CD4-positive, alpha-beta memory T cell (primary cell): ENCODE measurements at regions of chr1 and their contacts with region 1.

Region 1: DNA sequence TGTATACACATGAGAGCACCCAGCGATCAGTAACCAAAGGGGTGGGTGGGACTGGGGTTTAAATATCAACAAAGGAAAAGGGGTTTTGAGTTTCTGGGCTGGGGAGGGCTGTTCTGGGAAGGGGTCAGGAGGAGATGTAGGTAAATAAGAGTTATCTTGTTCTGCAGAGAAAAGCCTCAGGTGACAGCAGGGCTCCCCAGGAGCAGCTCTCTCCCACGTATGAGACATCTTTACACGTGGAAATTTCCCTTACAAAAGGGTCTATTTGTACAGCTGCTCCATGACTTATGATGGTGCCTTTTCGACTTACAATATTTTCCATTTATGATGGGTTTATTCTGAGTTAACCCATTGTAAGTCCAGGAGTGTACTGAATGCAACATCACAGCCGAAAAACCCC is 16.3 kb upstream of the PADI2 start:
- DNase-seq: no peak
- H3K4me3 ChIP-seq: no peak overlapping the region
- H3K4me3 Mint-ChIP-seq: no peak overlapping the region
- H3K27ac ChIP-seq: no peak overlapping the region
- H3K27ac Mint-ChIP-seq: no peak overlapping the region
- H3K4me1 ChIP-seq: no peaks in the 10 kb centered on the region
- H3K4me1 Mint-ChIP-seq: no peaks in the 10 kb centered on the region
- H3K27me3 ChIP-seq: no peaks in the 10 kb centered on the region
- H3K27me3 Mint-ChIP-seq: peaks cover 17 to 20% of the 10 kb centered on the region in 2 donors

Region 2: DNA sequence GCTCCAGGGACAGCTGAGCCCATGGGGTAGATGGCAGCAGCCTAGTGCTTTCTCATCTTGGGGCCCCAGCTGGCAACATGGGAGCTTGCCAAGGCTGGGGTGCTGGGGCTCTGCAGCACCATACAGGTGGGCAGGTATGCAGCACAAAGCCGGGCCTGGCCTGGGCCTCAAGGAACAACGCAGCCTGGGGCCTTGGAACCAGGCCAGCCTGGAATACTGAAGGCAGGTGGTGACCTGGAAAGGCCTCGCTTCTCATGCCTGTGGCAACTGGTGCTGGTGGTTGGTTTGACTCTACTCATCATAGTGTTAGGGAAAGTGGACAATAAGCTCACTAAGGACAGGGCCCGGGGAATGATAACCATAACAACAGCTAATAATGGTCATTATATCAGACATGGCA is 54.6 kb before region 1 on chr1:
- CTCF ChIA-PET with region 1: no interaction called
- POLR2A ChIA-PET with region 1: no interaction called
- intact Hi-C with region 1: no loop called
- DNase-seq: no peak
- H3K4me3 ChIP-seq: no peak overlapping the region
- H3K4me3 Mint-ChIP-seq: no peak overlapping the region
- H3K27ac ChIP-seq: no peak overlapping the region
- H3K27ac Mint-ChIP-seq: no peak overlapping the region
- H3K4me1 ChIP-seq: no peaks in the 10 kb centered on the region
- H3K4me1 Mint-ChIP-seq: no peaks in the 10 kb centered on the region
- H3K27me3 ChIP-seq: no peaks in the 10 kb centered on the region
- H3K27me3 Mint-ChIP-seq: peaks cover 5 to 7% of the 10 kb centered on the region in 2 donors

Region 3: GRCh38 chr1:17236779-17237560 is 101.4 kb after region 1 on chr1:
- CTCF ChIA-PET with region 1: interaction called, 16 read pairs
- POLR2A ChIA-PET with region 1: no interaction called
- intact Hi-C with region 1: no loop called
- DNase-seq: peak; percentile 69 to 79 (median 74)
- H3K4me3 ChIP-seq: no peak overlapping the region
- H3K4me3 Mint-ChIP-seq: no peak overlapping the region
- H3K27ac ChIP-seq: no peak overlapping the region
- H3K27ac Mint-ChIP-seq: peak overlapping the region in 1 of 7 donors; percentile 73
- H3K4me1 ChIP-seq: no peaks in the 10 kb centered on the region
- H3K4me1 Mint-ChIP-seq: peaks cover 0 to 9% (median 0%) of the 10 kb centered on the region in 4 donors
- H3K27me3 ChIP-seq: no peaks in the 10 kb centered on the region
- H3K27me3 Mint-ChIP-seq: peaks cover 2 to 3% of the 10 kb centered on the region in 2 donors

Region 4: GRCh38 chr1:17250601-17251000 is 115.1 kb after region 1 on chr1:
- CTCF ChIA-PET with region 1: no interaction called
- POLR2A ChIA-PET with region 1: no interaction called
- intact Hi-C with region 1: no loop called
- DNase-seq: no peak
- H3K4me3 ChIP-seq: no peak overlapping the region
- H3K4me3 Mint-ChIP-seq: no peak overlapping the region
- H3K27ac ChIP-seq: no peak overlapping the region
- H3K27ac Mint-ChIP-seq: no peak overlapping the region
- H3K4me1 ChIP-seq: no peaks in the 10 kb centered on the region
- H3K4me1 Mint-ChIP-seq: no peaks in the 10 kb centered on the region
- H3K27me3 ChIP-seq: no peaks in the 10 kb centered on the region
- H3K27me3 Mint-ChIP-seq: peaks cover 6 to 13% of the 10 kb centered on the region in 2 donors